IMR-90 (cell line): ENCODE measurements at regions of chr19 and their contacts with region 1.

Region 1: GRCh38 chr19:16324384-16325160 is at the start of gene KLF2:
- DNase-seq: peak; percentile 90
- ATAC-seq: peak; percentile 90
- H3K4me3 ChIP-seq: peak within 1 kb of the TSS; percentile 96
- H3K27ac ChIP-seq: peak within 1 kb of the TSS; percentile 91
- H3K4me1 ChIP-seq: peaks cover 19% of the 10 kb centered on the region
- H3K27me3 ChIP-seq: no peaks in the 10 kb centered on the region
- CTCF ChIP-seq: no peak
- POLR2A ChIP-seq: peak; percentile 99
- RAD21 ChIP-seq: no peak
- total RNA-seq, gene KLF2: 1.1 and 3.3 TPM in 2 replicates

Region 2: GRCh38 chr19:16175954-16176353 is 148.6 kb before region 1 on chr19:
- CTCF ChIA-PET with region 1: no interaction called
- POLR2A ChIA-PET with region 1: no interaction called
- dilution Hi-C with region 1: no loop called
- in situ Hi-C with region 1: no loop called
- intact Hi-C with region 1: no loop called
- DNase-seq: no peak
- ATAC-seq: no peak
- H3K4me3 ChIP-seq: no peak overlapping the region
- H3K27ac ChIP-seq: no peak overlapping the region
- H3K4me1 ChIP-seq: peaks cover 4% of the 10 kb centered on the region; the same call in 1 of the 2 replicates
- H3K27me3 ChIP-seq: no peaks in the 10 kb centered on the region
- CTCF ChIP-seq: no peak
- POLR2A ChIP-seq: no peak
- RAD21 ChIP-seq: no peak

Region 3: DNA sequence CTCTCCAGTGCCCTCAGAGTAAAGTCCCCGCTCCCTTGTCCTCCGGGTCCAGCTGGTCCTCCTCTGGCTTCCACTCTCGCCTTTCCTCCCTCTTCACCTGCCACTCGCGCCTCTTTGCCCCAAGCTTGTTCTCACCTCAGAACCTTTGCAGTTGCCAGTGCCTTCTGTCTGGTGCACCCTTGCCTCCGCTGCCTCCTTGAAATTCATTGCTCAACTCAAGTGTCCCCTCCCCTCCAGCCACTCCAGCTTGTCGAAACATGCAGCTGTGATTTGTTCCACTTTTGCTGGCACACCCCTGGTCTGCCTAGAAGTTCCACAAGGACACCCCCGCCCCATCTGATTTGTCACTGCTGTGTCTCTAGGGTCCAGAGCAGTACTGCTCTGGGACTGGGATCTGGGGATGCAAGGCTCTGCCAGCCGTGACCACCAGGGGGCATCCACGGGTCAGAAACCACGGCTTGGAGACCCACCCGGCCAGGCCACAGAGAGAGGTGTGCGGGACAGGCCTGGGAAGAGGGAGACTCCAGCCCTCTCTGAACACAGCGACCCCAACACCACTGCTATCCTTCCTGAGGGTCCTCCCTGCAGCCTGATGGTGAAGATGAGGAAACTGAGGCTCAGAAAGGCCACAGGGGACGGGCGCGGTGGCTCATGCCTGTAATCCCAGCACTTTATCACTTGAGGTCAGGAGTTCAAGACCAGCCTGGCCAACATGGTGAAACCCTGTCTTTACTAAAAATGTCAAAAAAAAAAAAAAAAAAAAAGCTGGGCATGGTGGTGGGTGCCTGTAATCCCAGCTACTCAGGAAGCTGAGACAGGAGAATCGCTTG is 77.0 kb before region 1 on chr19:
- CTCF ChIA-PET with region 1: interaction called, 3 read pairs
- POLR2A ChIA-PET with region 1: interaction called, 3 read pairs
- dilution Hi-C with region 1: no loop called
- in situ Hi-C with region 1: loop called (anchors 5 kb)
- intact Hi-C with region 1: loop called (anchors 2 kb)
- DNase-seq: peak; percentile 70
- ATAC-seq: peak; percentile 98
- H3K4me3 ChIP-seq: no peak overlapping the region
- H3K27ac ChIP-seq: no peak overlapping the region
- H3K4me1 ChIP-seq: no peaks in the 10 kb centered on the region; the same call in 1 of the 2 replicates
- H3K27me3 ChIP-seq: no peaks in the 10 kb centered on the region
- CTCF ChIP-seq: peak; percentile 96
- POLR2A ChIP-seq: peak; percentile 44; the same call in 1 of the 2 replicates
- RAD21 ChIP-seq: peak; percentile 97

Region 4: DNA sequence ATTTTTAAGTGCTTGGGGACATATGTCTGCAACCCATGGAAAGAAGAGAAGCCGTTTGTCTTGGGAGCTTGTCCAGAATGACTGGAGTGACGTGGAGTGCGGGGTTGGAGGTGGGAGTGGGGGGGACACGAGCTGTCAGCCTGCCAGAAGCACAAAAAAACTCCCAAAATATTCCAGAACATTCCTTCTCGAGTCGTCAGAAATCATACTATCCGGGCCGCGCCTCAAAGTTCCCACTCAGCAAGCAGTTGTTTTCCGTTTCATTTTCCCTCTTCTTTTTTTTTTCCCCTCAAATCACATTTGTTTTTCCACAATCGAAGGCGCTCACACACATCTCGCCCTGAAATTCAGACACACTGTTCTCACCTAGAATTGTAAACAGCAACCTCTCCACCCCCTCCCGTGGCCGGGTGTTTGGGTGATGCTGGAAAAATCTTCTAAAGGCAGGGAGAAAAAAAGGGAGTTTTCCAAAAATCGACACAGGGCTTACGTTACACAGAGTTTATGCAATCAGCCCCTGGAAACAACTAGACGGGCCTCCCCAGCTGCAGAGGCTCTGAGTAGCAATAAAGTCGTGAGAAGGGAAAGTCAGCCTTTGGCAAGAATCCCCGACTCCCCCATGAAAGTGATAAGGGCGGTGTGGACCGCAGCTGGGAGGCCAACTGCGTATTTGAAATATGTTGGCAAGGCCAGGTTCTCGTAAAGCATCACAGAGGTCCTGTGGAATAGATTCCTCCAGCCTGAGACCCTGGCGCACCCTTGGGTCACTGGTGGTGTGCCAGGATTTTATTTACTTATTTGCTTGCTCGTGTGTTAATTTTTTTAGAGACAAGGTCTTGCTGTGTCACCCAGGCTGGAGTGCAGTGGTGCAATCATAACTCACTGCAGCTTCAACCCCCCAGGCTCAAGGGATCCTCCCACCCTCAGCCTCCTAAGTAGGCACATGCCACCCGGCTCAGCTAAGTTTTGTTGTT is 31.2 kb before region 1 on chr19:
- CTCF ChIA-PET with region 1: no interaction called
- POLR2A ChIA-PET with region 1: no interaction called
- dilution Hi-C with region 1: no loop called
- in situ Hi-C with region 1: no loop called
- intact Hi-C with region 1: loop called (anchors 1 kb)
- DNase-seq: peak; percentile 99
- ATAC-seq: peak; percentile 91
- H3K4me3 ChIP-seq: peak overlapping the region; percentile 42
- H3K27ac ChIP-seq: peak overlapping the region; percentile 87
- H3K4me1 ChIP-seq: peaks cover 7% of the 10 kb centered on the region
- H3K27me3 ChIP-seq: peaks cover 4% of the 10 kb centered on the region; the same call in 1 of the 2 replicates
- CTCF ChIP-seq: no peak
- POLR2A ChIP-seq: peak; percentile 67
- RAD21 ChIP-seq: no peak

Region 5: GRCh38 chr19:16397791-16398471 is 73.4 kb after region 1 on chr19:
- CTCF ChIA-PET with region 1: no interaction called
- POLR2A ChIA-PET with region 1: no interaction called
- dilution Hi-C with region 1: no loop called
- in situ Hi-C with region 1: no loop called
- intact Hi-C with region 1: no loop called
- DNase-seq: no peak
- ATAC-seq: no peak
- H3K4me3 ChIP-seq: no peak overlapping the region
- H3K27ac ChIP-seq: no peak overlapping the region
- H3K4me1 ChIP-seq: peaks cover 3% of the 10 kb centered on the region
- H3K27me3 ChIP-seq: no peaks in the 10 kb centered on the region
- CTCF ChIP-seq: no peak
- POLR2A ChIP-seq: no peak
- RAD21 ChIP-seq: no peak

Region 6: GRCh38 chr19:16446724-16447368 is 122.3 kb after region 1 on chr19:
- CTCF ChIA-PET with region 1: no interaction called
- POLR2A ChIA-PET with region 1: interaction called, 14 read pairs
- dilution Hi-C with region 1: no loop called
- in situ Hi-C with region 1: no loop called
- intact Hi-C with region 1: no loop called
- DNase-seq: peak; percentile 91
- ATAC-seq: peak; percentile 98
- H3K4me3 ChIP-seq: no peak overlapping the region
- H3K27ac ChIP-seq: peak overlapping the region; percentile 62; the same call in 1 of the 2 replicates
- H3K4me1 ChIP-seq: peaks cover 12% of the 10 kb centered on the region
- H3K27me3 ChIP-seq: no peaks in the 10 kb centered on the region
- CTCF ChIP-seq: no peak
- POLR2A ChIP-seq: no peak
- RAD21 ChIP-seq: peak; percentile 16; the same call in 1 of the 2 replicates

Region 7: DNA sequence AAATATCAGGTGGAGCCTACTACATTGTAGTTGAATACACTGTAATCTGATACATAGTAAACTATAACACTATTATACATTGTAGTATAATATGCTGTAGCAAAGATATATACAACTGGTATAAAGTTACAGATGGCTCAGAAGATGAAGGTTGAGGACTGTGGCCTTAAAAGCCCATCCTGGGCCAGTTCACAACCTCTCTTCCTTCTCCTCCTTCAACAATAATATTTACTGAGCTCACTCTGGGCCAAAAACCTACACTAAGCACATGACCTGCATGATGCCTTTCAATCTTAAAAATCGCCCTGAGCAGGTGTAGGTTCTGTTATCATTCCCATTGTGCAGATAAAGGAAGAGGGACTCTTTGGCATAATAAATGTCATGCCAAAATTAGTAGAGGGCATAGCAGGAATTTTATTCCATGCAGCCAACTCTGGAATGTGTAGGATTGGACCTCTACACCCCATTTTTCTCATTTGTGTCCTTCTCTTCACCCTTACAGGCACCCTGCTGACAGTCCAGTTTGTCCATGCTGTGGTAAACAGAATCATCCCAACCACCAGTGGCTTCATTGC is 490.0 kb after region 1 on chr19:
- CTCF ChIA-PET with region 1: no interaction called
- POLR2A ChIA-PET with region 1: no interaction called
- dilution Hi-C with region 1: no loop called
- in situ Hi-C with region 1: no loop called
- intact Hi-C with region 1: no loop called
- DNase-seq: peak; percentile 46
- ATAC-seq: no peak
- H3K4me3 ChIP-seq: no peak overlapping the region
- H3K27ac ChIP-seq: no peak overlapping the region
- H3K4me1 ChIP-seq: no peaks in the 10 kb centered on the region
- H3K27me3 ChIP-seq: peaks cover 2% of the 10 kb centered on the region; the same call in 1 of the 2 replicates
- CTCF ChIP-seq: no peak
- POLR2A ChIP-seq: no peak
- RAD21 ChIP-seq: no peak